ENCODE measurements at regions of chrX and their contacts with region 1.

Region 1: GRCh38 chrX:1528186-1528883 is 8.7 kb downstream of the P2RY8 start:
- DNase-seq: peak; percentile 60
- H3K4me3 Mint-ChIP-seq: no peak overlapping the region
- H3K27ac Mint-ChIP-seq: no peak overlapping the region
- H3K4me1 Mint-ChIP-seq: peaks cover 5% of the 10 kb centered on the region
- H3K27me3 Mint-ChIP-seq: no peaks in the 10 kb centered on the region

Region 2: DNA sequence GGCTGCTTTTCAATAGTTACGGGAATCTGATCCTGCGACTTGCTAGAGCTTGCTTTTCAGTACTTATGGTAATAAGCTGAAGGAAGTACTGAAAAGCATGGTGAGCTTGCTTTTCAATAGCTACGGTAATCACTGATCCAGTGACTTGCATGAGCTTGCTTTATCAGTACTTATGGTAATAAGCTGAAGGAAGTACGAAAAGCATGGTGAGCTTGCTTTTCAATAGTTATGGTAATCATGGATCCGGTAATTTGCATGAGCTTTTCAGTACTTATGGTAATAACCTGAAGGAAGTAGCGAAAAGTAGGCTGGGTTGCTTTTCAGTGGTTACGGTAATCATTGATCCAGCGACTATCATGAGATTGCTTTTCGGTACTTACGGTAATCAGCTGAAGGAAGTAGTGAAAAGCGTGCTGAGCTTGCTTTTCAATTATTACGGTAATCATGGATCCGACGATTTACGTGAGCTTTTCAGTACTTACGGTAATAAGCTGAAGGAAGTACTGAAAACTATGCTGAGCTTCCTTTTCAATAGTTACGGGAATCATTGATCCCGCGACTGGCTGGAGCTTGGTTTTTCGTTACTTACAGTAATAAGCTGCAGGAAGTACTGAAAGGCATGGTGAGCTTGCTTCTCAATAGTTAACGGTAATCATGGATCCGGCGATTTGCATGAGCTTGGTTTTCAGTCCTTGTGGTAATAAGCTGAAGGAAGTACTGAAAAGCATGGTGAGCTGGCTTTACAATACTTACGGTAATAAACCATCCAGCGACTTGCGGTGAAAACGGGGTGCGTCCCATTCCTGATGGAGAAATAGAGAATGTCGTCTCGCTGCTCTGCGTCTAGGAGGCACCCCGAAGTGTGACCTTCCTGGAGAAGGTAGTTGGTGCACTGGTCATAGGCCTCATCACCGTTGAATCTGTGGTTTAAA is 322.4 kb before region 1 on chrX:
- CTCF ChIA-PET with region 1: no interaction called
- POLR2A ChIA-PET with region 1: no interaction called
- intact Hi-C with region 1: loop called (anchors 1 kb)
- DNase-seq: peak; percentile 50
- H3K4me3 Mint-ChIP-seq: peak overlapping the region; percentile 62
- H3K27ac Mint-ChIP-seq: peak overlapping the region; percentile 30
- H3K4me1 Mint-ChIP-seq: peaks cover 34% of the 10 kb centered on the region
- H3K27me3 Mint-ChIP-seq: peaks cover 3% of the 10 kb centered on the region

Region 3: GRCh38 chrX:1327651-1328304 is 200.6 kb before region 1 on chrX:
- CTCF ChIA-PET with region 1: no interaction called
- POLR2A ChIA-PET with region 1: no interaction called
- intact Hi-C with region 1: no loop called
- DNase-seq: no peak
- H3K4me3 Mint-ChIP-seq: no peak overlapping the region
- H3K27ac Mint-ChIP-seq: no peak overlapping the region
- H3K4me1 Mint-ChIP-seq: peaks cover 4% of the 10 kb centered on the region
- H3K27me3 Mint-ChIP-seq: peaks cover 12% of the 10 kb centered on the region

Region 4: GRCh38 chrX:1462596-1463251 is 65.6 kb before region 1 on chrX:
- CTCF ChIA-PET with region 1: no interaction called
- POLR2A ChIA-PET with region 1: no interaction called
- intact Hi-C with region 1: loop called (anchors 1 kb)
- DNase-seq: peak; percentile 89
- H3K4me3 Mint-ChIP-seq: peak overlapping the region; percentile 61
- H3K27ac Mint-ChIP-seq: peak overlapping the region; percentile 96
- H3K4me1 Mint-ChIP-seq: peaks cover 60% of the 10 kb centered on the region
- H3K27me3 Mint-ChIP-seq: no peaks in the 10 kb centered on the region

Region 5: GRCh38 chrX:1500701-1501624 is 27.4 kb before region 1 on chrX:
- CTCF ChIA-PET with region 1: no interaction called
- POLR2A ChIA-PET with region 1: no interaction called
- intact Hi-C with region 1: loop called (anchors 2 kb)
- DNase-seq: peak; percentile 47
- H3K4me3 Mint-ChIP-seq: peak overlapping the region; percentile 16
- H3K27ac Mint-ChIP-seq: peak overlapping the region; percentile 77
- H3K4me1 Mint-ChIP-seq: peaks cover 27% of the 10 kb centered on the region
- H3K27me3 Mint-ChIP-seq: no peaks in the 10 kb centered on the region

Region 6: DNA sequence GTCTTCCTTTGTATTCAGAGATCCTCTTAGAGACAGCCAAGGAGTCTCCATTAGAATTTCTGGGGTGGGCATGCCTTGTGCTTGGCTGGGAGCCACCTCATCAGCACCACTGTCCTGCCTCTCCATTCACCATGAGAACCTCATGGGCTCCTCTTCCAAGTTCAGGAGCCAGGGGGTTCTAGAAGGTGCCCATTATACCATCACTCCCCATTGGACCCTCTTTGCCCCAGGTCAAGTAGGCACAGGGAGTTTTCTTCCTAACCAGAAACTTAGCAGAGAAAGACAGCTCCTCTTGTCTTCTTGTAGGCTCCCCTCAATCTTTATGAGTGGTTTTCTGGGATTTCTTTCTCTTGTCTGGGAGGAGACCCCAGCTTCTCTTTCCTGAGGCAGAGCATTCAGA is 117.7 kb after region 1 on chrX:
- CTCF ChIA-PET with region 1: no interaction called
- POLR2A ChIA-PET with region 1: no interaction called
- intact Hi-C with region 1: no loop called
- DNase-seq: no peak
- H3K4me3 Mint-ChIP-seq: no peak overlapping the region
- H3K27ac Mint-ChIP-seq: no peak overlapping the region
- H3K4me1 Mint-ChIP-seq: peaks cover 3% of the 10 kb centered on the region
- H3K27me3 Mint-ChIP-seq: peaks cover 10% of the 10 kb centered on the region

Measured in activated CD4-positive, alpha-beta memory T cell treated with anti-CD3 and anti-CD28 coated beads for 36 hours (primary cell).